ENCODE measurements at regions of chr15 and their contacts with region 1.

Region 1: DNA sequence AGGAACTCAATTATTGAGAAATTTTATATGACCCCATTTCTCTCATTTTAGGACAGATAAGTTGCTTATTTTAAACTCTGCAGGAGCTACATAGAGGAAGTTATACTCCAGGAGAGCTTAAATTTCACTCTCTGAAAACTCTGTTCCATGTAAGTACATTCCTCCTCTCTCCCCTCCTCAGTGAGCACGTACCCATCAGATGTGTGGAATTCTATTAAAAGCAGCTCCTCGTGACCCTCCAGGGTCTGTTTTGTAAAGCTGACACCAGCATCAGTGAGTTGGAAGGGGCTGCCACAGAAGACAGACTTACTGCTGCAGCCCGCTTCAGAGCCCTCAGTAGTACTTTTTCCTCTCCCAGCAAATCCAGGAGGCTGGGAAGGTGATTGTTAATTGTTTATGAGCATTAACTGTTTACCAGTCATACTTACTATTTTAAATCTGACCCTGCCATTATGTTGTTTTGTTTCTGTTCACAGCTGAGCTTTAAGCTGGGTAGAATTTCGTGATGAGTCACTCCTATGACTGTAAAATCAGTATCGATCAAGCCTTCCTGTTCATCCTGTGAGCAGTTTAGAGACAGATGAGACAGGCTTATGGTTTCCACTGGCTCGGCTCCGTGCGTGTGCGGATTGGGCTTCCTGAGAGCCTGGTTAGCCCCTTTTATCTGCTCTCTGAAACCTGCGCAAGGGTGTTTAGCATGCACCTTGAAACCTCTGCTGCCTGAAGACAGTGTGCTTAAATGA is 20.4 kb downstream of the IGF1R start:
- DNase-seq: peak; percentile 84
- H3K4me3 Mint-ChIP-seq: no peak overlapping the region
- H3K27ac Mint-ChIP-seq: peak overlapping the region; percentile 32
- H3K4me1 Mint-ChIP-seq: peaks cover 80% of the 10 kb centered on the region
- H3K27me3 Mint-ChIP-seq: no peaks in the 10 kb centered on the region

Region 2: GRCh38 chr15:98713585-98714001 is 44.9 kb after region 1 on chr15:
- CTCF ChIA-PET with region 1: no interaction called
- intact Hi-C with region 1: loop called (anchors 1 kb)
- DNase-seq: peak; percentile 43
- H3K4me3 Mint-ChIP-seq: no peak overlapping the region
- H3K27ac Mint-ChIP-seq: peak overlapping the region; percentile 57
- H3K4me1 Mint-ChIP-seq: peaks cover 61% of the 10 kb centered on the region
- H3K27me3 Mint-ChIP-seq: no peaks in the 10 kb centered on the region

Region 3: GRCh38 chr15:98738689-98739401 is 70.1 kb after region 1 on chr15:
- CTCF ChIA-PET with region 1: no interaction called
- intact Hi-C with region 1: loop called (anchors 2 kb)
- DNase-seq: no peak
- H3K4me3 Mint-ChIP-seq: no peak overlapping the region
- H3K27ac Mint-ChIP-seq: peak overlapping the region; percentile 39
- H3K4me1 Mint-ChIP-seq: peaks cover 86% of the 10 kb centered on the region
- H3K27me3 Mint-ChIP-seq: no peaks in the 10 kb centered on the region

Region 4: DNA sequence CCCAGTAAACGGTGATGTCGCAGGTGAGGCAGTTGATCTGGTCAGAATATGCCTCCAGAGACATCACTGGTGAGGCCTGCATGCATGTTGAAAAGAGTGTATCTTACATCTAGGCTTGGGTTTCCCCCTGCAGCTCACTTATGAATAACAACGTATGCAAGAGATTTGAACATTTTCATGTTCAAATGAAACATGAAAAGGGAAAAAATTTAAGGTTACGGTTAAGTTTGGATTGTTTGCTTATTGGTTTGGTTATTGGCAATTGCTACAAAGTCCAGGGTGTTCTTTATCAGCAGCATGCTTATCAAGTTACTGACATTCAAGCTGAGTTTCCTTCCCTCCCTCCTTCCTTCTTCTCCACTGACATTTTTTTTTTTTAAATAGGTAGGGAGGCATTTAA is 102.8 kb after region 1 on chr15:
- CTCF ChIA-PET with region 1: no interaction called
- intact Hi-C with region 1: loop called (anchors 5 kb)
- DNase-seq: peak; percentile 36
- H3K4me3 Mint-ChIP-seq: no peak overlapping the region
- H3K27ac Mint-ChIP-seq: no peak overlapping the region
- H3K4me1 Mint-ChIP-seq: peaks cover 74% of the 10 kb centered on the region
- H3K27me3 Mint-ChIP-seq: no peaks in the 10 kb centered on the region

Region 5: GRCh38 chr15:98881526-98882520 is 213.1 kb after region 1 on chr15:
- CTCF ChIA-PET with region 1: interaction called, 3 read pairs
- intact Hi-C with region 1: loop called (anchors 1 kb)
- DNase-seq: peak; percentile 23
- H3K4me3 Mint-ChIP-seq: no peak overlapping the region
- H3K27ac Mint-ChIP-seq: peak overlapping the region; percentile 25
- H3K4me1 Mint-ChIP-seq: peaks cover 14% of the 10 kb centered on the region
- H3K27me3 Mint-ChIP-seq: no peaks in the 10 kb centered on the region

Measured in activated naive CD4-positive, alpha-beta T cell treated with anti-CD3 and anti-CD28 coated beads for 36 hours (primary cell).